Ascending aorta (tissue), 2 donors: ENCODE measurements at regions of chr4 and their contacts with region 1.

Region 1: GRCh38 chr4:98939892-98940298 is 11.0 kb upstream of the EIF4E start:
- DNase-seq: no peak
- H3K4me3 ChIP-seq: no peak overlapping the region
- H3K27ac ChIP-seq: peak overlapping the region in 1 of 2 donors; percentile 73
- H3K4me1 ChIP-seq: peaks cover 0 to 6% of the 10 kb centered on the region in 2 donors
- H3K27me3 ChIP-seq: no peaks in the 10 kb centered on the region
- CTCF ChIP-seq: peak; percentile 45 to 66 (median 54)

Region 2: DNA sequence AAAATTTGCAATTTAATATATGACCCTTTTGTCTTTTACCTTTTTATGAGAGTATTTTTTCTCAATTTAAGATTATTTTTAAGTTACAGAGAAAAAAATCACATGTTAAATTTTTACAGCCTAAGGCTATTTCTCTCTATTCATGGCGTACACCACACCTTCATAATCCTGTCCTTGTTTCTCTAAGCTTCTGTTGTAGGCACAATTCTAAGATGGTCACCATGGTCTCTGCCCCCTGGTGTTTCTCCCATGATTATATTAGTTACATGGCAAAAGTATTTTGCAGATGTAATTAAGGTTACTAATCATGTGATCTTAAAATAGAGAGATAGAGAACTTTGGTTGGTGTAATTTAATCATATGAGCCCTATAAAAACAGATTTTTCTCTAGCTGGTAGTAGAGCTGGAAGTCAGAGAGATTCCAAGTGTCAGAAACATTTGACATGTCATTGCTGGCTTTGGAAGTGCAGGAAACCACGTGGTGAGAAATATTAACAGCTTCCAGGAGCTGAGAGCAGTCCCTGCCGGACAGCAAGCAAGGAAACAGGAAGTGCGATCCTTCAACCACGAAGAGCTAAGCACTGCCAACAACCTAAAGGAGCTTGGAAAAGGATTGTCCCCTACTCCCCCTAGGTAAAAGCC is 100.8 kb before region 1 on chr4:
- intact Hi-C with region 1: no loop called
- DNase-seq: no peak
- H3K4me3 ChIP-seq: peak overlapping the region in 1 of 2 donors; percentile 8
- H3K27ac ChIP-seq: no peak overlapping the region
- H3K4me1 ChIP-seq: peaks cover 0 to 5% of the 10 kb centered on the region in 2 donors
- H3K27me3 ChIP-seq: no peaks in the 10 kb centered on the region
- CTCF ChIP-seq: no peak

Region 3: DNA sequence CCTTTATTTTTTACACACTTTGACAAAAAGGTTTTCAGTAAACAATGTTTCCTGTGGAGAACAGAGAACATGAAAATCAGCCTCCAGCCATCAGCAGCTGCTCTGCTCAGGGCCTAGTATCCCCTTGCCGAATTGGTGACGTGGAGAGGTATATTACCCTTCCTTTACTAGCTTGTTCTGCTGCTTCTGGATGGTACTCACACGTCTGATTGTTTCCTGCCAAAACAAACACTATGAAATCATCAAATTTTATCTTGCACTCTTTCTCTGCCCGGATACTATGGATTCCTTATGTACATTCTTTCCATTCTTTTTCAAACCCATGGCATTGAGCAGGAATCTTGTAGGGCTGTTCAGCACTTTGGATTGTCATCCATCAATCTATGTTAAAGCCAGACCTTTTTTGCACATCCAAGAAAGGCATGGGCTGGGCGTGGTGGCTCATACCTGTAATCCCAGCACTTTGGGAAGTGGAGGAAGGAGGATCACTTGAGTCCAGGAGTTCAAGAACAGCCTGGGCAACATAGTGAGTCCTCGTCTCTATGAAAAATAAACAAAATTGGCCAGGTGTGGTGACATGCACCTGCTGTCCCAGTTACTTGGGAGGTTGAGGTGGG is 36.9 kb after region 1 on chr4:
- intact Hi-C with region 1: loop called (anchors 5 kb)
- DNase-seq: no peak
- H3K4me3 ChIP-seq: no peak overlapping the region
- H3K27ac ChIP-seq: peak overlapping the region in 1 of 2 donors; percentile 38
- H3K4me1 ChIP-seq: peaks cover 0 to 6% of the 10 kb centered on the region in 2 donors
- H3K27me3 ChIP-seq: no peaks in the 10 kb centered on the region
- CTCF ChIP-seq: no peak

Region 4: DNA sequence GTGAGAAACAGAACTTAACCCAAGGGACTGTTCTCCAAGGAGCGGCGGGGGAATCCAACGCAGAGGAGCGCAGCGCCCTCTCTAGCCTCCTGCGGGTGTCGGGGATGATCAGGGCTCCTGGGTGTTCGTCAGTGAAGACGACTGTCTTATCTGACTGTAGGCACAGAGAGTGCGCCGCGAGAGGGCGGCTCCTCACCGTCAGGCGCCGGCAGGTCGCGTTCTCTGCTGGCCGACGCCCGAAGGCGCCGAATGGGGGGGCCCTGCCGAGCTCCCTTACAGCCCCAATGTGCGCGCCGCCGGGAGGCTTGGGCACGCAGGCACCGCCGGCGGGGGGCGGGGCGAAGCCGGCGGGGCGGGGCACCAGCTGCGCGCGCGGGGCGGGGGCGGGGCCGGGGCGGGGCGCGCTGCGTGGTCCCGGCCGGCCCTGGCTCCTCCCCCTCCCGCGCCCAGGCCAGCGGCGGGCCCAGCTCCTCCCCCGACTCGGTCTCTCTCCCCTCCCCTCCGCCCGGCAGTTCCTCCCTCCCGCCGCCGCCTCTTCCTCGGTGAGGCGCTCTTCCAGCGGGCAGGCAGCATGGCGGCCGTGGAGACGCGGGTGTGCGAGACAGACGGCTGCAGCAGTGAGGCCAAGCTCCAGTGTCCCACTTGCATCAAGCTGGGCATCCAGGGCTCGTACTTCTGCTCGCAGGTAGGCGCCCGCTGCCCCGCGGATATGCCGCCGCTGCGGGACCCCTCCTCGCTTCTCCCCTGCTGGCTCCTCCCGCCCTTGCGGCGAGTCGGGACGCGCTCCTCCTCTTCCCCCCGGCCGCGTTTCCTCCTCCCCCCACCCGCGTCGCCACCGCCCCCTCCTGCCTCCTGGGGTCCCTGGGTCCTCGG is 55.5 kb after region 1 on chr4 and contains the start of gene METAP1:
- intact Hi-C with region 1: loop called (anchors 2 kb)
- DNase-seq: peak; percentile 82 to 96
- H3K4me3 ChIP-seq: peak within 1 kb of the TSS; percentile 91
- H3K27ac ChIP-seq: peak within 1 kb of the TSS; percentile 81 to 91
- H3K4me1 ChIP-seq: peaks cover 0 to 7% of the 10 kb centered on the region in 2 donors
- H3K27me3 ChIP-seq: no peaks in the 10 kb centered on the region
- CTCF ChIP-seq: peak; percentile 39 to 64 (median 58)
- total RNA-seq, gene METAP1: 53.2 TPM